ENCODE measurements at regions of chr1 and their contacts with region 1.

Region 1: GRCh38 chr1:11735854-11736745 is at the start of gene AGTRAP:
- DNase-seq: peak; percentile 84 to 94
- ATAC-seq: peak; percentile 67 to 78 (median 74)
- H3K4me3 ChIP-seq: peak within 1 kb of the TSS; percentile 72
- H3K4me3 Mint-ChIP-seq: peak within 1 kb of the TSS; percentile 93
- H3K27ac ChIP-seq: peak within 1 kb of the TSS; percentile 62
- H3K27ac Mint-ChIP-seq: peak within 1 kb of the TSS; percentile 87 to 98
- H3K4me1 ChIP-seq: peaks cover 77% of the 10 kb centered on the region
- H3K4me1 Mint-ChIP-seq: peaks cover 70 to 74% of the 10 kb centered on the region in 2 donors
- H3K27me3 ChIP-seq: no peaks in the 10 kb centered on the region
- H3K27me3 Mint-ChIP-seq: no peaks in the 10 kb centered on the region
- CTCF ChIP-seq: no peak
- total RNA-seq, gene AGTRAP: 94.6 to 122 (median 104) TPM

Region 2: GRCh38 chr1:11262171-11263049 is 473.7 kb before region 1 on chr1 and contains the start of gene MTOR:
- intact Hi-C with region 1: loop called (anchors 10 kb)
- DNase-seq: peak; percentile 92 to 99
- ATAC-seq: peak; percentile 95 to 99 (median 97)
- H3K4me3 ChIP-seq: peak within 1 kb of the TSS; percentile 91
- H3K4me3 Mint-ChIP-seq: peak within 1 kb of the TSS; percentile 89
- H3K27ac ChIP-seq: peak within 1 kb of the TSS; percentile 65
- H3K27ac Mint-ChIP-seq: peak within 1 kb of the TSS; percentile 74 to 90
- H3K4me1 ChIP-seq: peaks cover 15% of the 10 kb centered on the region
- H3K4me1 Mint-ChIP-seq: peaks cover 12 to 13% of the 10 kb centered on the region in 2 donors
- H3K27me3 ChIP-seq: no peaks in the 10 kb centered on the region
- H3K27me3 Mint-ChIP-seq: no peaks in the 10 kb centered on the region
- CTCF ChIP-seq: no peak
- total RNA-seq, gene MTOR: 42.7 to 54.6 (median 43.7) TPM

Region 3: DNA sequence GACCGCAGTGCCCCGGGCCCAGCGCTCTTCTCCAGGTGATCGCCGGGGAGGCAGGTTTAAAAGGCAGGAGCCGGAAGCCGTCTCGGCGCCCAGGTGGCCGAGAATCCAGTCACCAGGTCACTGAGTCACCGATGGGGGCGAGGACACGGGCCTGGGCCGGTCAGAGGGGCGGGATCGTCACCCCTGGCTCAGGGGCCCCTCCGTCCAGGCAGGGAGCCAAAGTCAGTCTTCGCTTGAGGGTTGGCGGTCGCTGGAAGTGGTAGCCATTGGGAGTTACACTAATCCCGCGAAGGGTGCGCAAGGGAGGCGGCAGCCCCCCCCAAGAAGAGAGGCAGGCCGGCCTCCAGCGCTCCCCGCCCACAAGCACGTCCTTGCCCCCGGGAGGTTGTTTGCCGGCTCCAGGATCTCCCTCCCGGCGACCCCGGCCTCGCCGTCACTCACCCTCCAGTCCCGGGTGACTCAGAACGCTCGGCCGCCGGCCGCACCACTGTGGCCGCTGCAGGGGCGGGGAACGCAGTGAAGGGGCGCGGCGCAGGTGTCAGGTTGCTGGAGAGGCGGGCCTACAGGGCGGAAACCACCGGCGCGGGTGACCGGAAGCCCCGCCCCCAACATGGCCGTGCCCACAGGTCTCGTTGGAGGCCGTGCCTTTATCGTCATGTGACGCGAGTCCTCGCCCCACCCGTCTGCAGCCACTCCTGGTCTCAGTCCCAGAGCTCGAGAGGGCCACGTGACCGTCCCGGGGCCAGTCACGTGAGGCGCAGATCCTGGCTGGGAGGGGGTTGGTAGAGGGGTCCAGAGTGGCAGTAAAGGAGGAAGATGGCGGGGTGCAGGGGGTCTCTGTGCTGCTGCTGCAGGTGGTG is 69.6 kb after region 1 on chr1 and contains the starts of genes CLCN6 and MTHFR:
- intact Hi-C with region 1: loop called (anchors 2 kb)
- DNase-seq: peak; percentile 98 to 99
- ATAC-seq: peak; percentile 77 to 93 (median 86)
- H3K4me3 ChIP-seq: peak within 1 kb of the TSS; percentile 90
- H3K4me3 Mint-ChIP-seq: peak within 1 kb of the TSS; percentile 99
- H3K27ac ChIP-seq: peak within 1 kb of the TSS; percentile 94
- H3K27ac Mint-ChIP-seq: peak within 1 kb of the TSS; percentile 95 to 97
- H3K4me1 ChIP-seq: peaks cover 48% of the 10 kb centered on the region
- H3K4me1 Mint-ChIP-seq: peaks cover 63 to 68% of the 10 kb centered on the region in 2 donors
- H3K27me3 ChIP-seq: no peaks in the 10 kb centered on the region
- H3K27me3 Mint-ChIP-seq: no peaks in the 10 kb centered on the region
- CTCF ChIP-seq: no peak
- total RNA-seq, gene CLCN6: 21.4 to 28.6 (median 25.6) TPM
- total RNA-seq, gene MTHFR: 61.8 to 78.4 (median 69.5) TPM

Region 4: DNA sequence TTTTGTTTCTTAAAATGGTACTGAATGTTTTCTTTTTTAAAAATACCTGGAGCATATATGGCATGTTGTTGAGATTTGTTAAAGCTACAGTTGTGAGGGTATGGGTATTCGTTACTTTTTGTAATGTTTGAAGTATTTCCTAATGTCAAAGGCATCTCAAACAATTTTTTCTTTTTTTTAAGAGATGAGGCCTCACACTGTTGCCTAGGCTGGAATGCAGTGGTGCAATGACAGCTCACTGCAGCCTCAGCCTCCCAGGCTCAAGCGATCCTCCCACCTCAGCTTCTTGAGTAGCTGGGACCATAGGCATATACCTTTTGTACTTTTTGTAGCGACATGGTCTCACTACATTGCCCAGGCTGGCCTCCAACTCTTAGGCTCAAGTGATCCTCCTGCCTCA is 86.0 kb after region 1 on chr1:
- intact Hi-C with region 1: no loop called
- DNase-seq: no peak
- ATAC-seq: no peak
- H3K4me3 ChIP-seq: no peak overlapping the region
- H3K4me3 Mint-ChIP-seq: no peak overlapping the region
- H3K27ac ChIP-seq: no peak overlapping the region
- H3K27ac Mint-ChIP-seq: no peak overlapping the region
- H3K4me1 ChIP-seq: no peaks in the 10 kb centered on the region
- H3K4me1 Mint-ChIP-seq: no peaks in the 10 kb centered on the region
- H3K27me3 ChIP-seq: no peaks in the 10 kb centered on the region
- H3K27me3 Mint-ChIP-seq: no peaks in the 10 kb centered on the region
- CTCF ChIP-seq: no peak

Region 5: DNA sequence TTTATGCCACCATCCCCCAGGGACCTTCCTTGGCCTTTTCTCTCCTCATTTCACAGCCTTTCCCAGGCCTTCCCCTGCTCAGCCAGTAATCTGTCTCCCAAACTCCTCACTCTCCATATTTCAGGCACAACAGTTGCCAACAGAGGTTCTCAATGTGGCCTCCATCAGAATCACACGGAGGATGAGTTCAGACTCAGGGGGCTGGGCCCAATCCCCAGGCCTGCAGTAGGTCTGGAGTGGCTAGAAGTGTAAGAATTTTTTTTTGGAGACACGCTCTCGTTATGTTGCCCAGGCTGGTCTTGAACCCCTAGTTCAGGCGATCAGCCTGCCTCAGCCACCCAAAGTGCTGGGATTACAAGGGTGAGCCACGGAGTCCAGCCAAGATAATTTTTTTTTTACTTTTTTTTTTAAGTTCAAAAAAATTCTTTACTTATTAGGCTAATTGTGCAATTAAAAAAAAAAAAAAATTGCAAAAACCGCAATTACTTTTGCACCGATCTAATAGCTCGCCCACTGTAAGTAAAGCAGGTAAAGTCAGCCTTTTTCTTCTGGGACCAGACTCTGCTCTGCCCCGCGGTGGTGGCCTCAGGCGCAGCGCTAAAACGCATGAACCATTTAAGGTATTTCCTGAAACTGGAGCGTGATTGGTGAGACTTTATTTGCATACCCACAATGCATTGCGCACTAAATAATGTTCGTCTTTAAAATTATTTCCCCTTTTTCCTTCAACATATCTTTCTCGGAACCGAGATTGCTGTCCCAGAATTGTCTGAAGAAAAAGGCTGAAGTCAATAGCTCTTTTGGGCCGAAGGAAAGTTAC is 171.4 kb after region 1 on chr1:
- intact Hi-C with region 1: no loop called
- DNase-seq: peak; percentile 91 to 97
- ATAC-seq: peak; percentile 60 to 84 (median 70)
- H3K4me3 ChIP-seq: no peak overlapping the region
- H3K4me3 Mint-ChIP-seq: peak overlapping the region; percentile 98
- H3K27ac ChIP-seq: peak overlapping the region; percentile 88
- H3K27ac Mint-ChIP-seq: peak overlapping the region; percentile 99 to 100
- H3K4me1 ChIP-seq: peaks cover 20% of the 10 kb centered on the region
- H3K4me1 Mint-ChIP-seq: peaks cover 35 to 36% of the 10 kb centered on the region in 2 donors
- H3K27me3 ChIP-seq: no peaks in the 10 kb centered on the region
- H3K27me3 Mint-ChIP-seq: no peaks in the 10 kb centered on the region
- CTCF ChIP-seq: peak; percentile 81